ENCODE measurements at regions of chr12 and their contacts with region 1.

Region 1: DNA sequence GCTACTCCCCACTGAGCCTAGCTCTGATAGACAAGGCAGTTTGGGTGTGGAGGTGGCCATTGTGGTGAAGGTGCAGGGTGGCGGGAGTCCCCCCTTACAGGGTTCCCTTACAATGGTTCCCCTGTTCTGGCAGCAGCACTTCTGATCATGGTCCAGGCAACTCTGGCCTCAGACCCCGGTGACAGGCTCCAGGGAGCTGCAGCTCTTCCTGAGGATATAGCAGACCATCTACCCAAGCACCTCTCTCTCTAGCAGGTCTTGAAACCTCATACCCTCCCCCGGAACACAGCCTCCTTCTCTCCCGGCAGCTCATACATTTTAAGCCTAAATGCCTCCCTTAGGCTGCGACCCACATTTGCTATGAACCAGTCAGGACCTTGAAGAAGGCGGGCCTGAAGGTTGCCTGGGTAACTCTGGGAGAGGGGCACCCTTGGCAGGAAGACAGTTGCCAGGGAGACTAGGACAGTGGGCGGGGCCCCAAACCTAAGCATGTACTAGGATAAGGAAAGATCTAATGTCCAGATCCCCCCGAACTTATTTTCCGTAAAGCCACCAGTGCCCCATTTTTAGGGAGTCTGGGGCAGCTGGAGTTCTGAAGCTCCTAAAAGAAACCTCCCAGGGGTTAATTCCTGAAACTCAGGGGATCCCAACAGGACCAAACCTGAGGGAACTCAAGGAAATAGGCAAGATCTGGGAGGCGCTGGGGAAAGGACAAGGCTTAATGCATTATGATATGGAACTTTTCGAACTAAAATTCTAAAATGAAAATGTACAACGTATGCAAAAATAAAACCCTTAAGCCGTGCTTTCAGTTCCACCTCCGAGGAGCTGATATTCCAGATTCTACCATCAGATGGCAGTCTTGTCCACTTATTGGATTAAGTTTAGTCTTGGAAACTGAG is 4.5 kb upstream of the GDF11 start:
- DNase-seq: peak; percentile 83
- CTCF ChIP-seq: peak; percentile 78

Region 2: DNA sequence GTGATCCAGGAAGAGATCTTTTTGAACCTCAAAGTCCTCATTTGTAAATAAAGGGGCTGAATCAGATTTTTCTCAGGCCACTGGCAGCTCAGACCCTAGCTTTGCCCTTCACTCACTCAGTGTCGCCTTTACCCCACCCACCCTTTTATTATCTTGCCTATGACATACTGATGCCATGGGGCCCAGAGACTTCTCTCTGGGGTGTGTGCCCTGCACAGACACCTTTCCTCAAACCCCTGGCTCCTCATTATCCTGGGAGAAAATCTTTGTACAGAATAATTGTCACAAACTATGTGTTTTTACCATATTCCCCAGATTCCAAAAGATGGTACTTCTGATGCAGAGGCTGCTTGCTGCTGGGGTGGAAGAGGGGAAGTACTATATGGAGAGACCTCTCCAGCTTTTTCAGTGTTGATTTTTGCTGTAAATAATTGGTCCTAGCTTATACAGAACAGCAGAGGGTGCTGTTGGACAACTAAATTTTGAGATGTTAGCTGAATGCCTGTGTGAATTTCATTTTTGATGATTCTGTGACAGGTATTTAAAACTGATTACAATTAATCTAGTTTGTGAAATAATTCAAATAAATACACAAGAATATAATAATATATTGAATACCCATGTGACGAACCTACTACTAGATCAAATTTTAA is 1036.3 kb before region 1 on chr12:
- CTCF ChIA-PET with region 1: no interaction called
- POLR2A ChIA-PET with region 1: no interaction called
- DNase-seq: peak; percentile 42
- CTCF ChIP-seq: peak; percentile 51

Region 3: GRCh38 chr12:55659486-55660385 is 78.6 kb before region 1 on chr12:
- CTCF ChIA-PET with region 1: interaction called, 10 read pairs
- POLR2A ChIA-PET with region 1: no interaction called
- DNase-seq: no peak
- CTCF ChIP-seq: peak; percentile 54

Region 4: GRCh38 chr12:55699471-55700055 is 38.8 kb before region 1 on chr12:
- CTCF ChIA-PET with region 1: no interaction called
- POLR2A ChIA-PET with region 1: no interaction called
- DNase-seq: no peak
- CTCF ChIP-seq: no peak

Region 5: DNA sequence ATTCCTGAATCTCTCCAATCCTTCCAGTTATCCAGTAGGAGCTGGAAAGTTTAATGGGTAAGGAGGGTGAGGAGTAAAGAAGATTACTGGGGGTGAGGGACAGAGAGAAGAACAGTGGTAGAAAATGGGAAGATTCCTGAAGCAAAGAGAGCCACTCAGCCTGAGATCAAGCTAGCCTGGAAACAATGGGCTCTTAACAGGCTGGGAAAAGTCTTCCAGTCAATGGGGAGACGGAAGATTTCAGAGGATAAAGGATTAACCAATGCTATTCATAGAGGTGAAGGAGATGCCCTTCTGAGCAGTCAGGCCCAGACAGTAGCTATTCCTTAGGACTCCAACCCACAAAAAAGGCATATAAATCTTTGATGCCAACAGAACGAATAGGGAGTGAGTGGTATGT is 19.3 kb after region 1 on chr12:
- CTCF ChIA-PET with region 1: interaction called, 44 read pairs
- POLR2A ChIA-PET with region 1: no interaction called
- DNase-seq: no peak
- CTCF ChIP-seq: no peak

Region 6: GRCh38 chr12:55874443-55874842 is 136.1 kb after region 1 on chr12:
- CTCF ChIA-PET with region 1: no interaction called
- POLR2A ChIA-PET with region 1: no interaction called
- DNase-seq: no peak
- CTCF ChIP-seq: no peak

Region 7: DNA sequence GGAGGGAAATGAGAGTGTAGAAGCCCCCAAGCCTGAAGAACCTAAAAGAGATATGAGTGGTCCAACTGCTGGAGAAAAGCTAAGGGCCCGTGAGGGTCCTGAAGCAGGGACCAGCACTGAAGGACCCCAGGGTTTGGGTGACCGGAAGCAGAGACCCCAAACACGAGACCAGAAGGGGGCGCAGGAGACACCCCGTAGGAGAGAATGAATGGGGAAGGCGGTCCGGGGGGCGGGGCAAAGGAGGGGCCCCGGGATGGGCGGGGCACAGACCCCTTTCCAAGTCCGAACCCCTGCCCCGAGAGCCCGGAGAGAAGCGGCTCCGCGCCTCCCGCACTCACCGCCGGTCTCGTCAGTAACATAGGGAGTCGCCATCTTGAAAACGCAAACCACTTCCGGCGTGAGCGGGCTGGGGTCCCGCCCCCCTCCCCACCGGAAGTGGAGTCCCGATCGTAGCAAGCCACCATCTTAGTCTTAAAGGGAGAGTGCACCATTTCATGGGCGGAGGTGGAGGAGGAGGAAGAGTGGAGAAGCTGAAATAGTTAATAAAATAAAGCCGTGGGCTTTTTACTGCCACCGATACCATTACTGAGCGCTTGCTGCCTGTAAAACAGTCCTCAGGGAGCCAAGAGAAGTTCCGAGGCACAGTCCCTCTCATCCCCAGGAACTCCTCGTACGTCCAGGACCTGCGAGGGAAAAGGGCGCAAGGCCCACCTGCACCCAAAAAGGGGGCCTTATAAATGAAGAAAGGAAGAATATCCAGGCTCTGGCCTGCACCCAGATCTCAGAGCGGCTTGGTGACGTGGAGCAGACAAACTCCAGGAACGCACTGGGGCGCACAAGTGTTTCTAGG is 188.6 kb after region 1 on chr12:
- CTCF ChIA-PET with region 1: interaction called, 20 read pairs
- POLR2A ChIA-PET with region 1: no interaction called
- DNase-seq: peak; percentile 91
- CTCF ChIP-seq: peak; percentile 72

Region 8: GRCh38 chr12:55966408-55967281 is 228.3 kb after region 1 on chr12 and contains the start of gene CDK2:
- CTCF ChIA-PET with region 1: interaction called, 12 read pairs
- POLR2A ChIA-PET with region 1: interaction called, 13 read pairs
- DNase-seq: peak; percentile 94
- CTCF ChIP-seq: no peak

Region 9: DNA sequence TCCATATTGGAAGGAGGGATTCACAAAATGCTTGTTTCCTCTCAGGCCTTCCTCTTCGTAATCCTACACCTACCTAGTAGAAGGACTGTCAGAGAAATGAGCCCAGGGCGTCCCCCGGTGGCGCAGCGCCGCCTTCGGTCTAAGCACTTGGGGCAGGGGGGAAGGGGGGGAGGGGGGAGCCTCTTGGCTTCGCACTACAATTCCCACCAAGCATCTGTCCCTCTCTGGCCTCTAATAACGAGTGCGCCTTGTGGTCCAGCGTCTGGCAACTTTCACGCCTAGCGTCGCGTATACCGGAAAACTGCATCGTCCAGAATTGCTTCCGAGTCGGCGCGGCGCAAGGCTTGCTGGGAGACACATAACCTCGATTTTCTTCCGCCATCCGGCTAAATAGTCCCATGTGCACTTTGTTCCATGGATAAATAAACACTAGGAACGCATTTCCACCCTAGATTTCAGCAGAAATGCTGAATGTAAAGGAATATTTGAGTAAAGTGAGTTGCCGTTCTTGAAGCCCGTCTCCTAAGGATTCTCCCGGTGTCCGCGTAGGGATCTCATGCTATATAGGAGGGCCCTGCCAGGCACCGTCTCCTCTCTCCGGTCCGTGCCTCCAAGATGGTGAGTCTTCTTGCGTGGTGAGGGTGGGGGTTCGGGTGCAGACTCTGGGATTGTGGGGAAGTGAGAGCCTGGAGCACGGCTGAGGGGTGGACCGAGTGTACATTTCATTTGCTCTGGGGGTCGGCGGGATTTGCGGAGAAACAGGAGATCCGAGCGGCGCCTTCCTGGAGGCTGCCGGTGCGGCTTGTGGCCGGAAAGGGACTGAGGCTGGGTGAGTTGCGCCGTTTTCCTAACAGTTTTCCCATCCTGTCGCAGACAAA is 303.4 kb after region 1 on chr12 and contains the start of gene RPS26:
- CTCF ChIA-PET with region 1: interaction called, 31 read pairs
- POLR2A ChIA-PET with region 1: no interaction called
- DNase-seq: peak; percentile 90
- CTCF ChIP-seq: peak; percentile 67

Region 10: DNA sequence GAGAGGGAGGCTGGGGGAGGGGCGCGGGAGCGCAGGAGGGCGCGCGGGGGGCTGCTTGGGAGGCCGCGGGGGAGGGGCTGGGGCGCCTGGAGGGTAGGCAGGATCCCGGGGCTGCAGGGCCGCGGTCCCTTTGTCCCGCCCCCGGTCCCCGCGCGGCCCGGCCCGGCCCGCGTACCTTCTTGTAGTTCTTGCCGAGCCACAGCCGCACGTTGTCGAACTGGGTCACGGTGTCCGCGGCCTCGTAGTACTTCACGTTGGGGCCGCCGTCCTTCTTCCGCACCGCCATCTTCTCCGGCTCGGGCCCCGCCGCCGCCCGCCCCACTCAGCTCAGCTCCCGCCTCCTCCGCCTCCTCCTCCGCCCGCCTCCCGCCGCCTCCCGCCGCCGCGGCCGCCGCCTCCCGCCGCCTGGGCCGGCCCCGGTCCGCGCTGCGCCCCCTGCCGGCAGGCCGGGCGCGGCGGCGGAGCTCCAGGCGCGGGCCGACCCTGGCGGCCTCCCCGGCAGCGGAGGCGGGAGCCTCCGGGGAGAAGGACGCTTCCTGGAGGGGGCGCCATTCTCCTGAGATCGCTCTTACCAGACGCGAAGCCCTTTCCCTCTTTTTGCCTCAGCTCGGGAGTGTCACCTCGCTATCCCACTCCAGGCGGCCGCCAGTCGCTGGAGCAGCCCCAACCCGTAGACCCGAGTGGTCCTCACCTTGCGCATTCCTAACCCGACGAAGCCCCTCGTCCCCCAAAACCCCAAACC is 451.0 kb after region 1 on chr12 and contains the start of gene SMARCC2:
- CTCF ChIA-PET with region 1: interaction called, 48 read pairs
- POLR2A ChIA-PET with region 1: no interaction called
- DNase-seq: peak; percentile 95
- CTCF ChIP-seq: peak; percentile 88

Region 11: DNA sequence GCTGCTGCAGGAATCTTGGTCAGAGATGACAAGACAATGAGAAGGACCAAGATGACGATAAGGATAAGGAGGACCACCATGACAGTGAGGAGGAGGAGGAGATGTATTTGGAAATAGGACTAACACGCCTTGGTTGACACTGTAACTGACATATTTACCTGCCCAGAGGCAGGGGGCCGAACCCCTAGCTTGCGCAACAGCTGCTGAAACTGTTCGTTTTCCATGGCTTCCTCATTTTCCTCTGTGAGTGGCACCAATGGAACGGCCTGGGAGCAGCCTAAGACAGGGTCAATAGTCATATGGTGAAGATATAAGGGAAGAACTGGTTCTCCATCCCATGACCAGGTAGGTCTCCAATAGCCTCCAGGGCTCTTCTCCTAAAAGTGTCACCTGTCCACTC is 682.0 kb after region 1 on chr12:
- CTCF ChIA-PET with region 1: no interaction called
- POLR2A ChIA-PET with region 1: no interaction called
- DNase-seq: no peak
- CTCF ChIP-seq: no peak